ENCODE measurements at regions of chr5 and their contacts with region 1.

Region 1: GRCh38 chr5:141040771-141041426 is 10.3 kb upstream of the PCDHB1 start:
- DNase-seq: peak; percentile 88
- H3K4me3 ChIP-seq: no peak overlapping the region
- H3K4me3 Mint-ChIP-seq: no peak overlapping the region
- H3K27ac Mint-ChIP-seq: no peak overlapping the region
- H3K4me1 ChIP-seq: no peaks in the 10 kb centered on the region
- H3K4me1 Mint-ChIP-seq: no peaks in the 10 kb centered on the region
- H3K27me3 ChIP-seq: no peaks in the 10 kb centered on the region
- H3K27me3 Mint-ChIP-seq: no peaks in the 10 kb centered on the region
- CTCF ChIP-seq: peak; percentile 56 to 87

Region 2: DNA sequence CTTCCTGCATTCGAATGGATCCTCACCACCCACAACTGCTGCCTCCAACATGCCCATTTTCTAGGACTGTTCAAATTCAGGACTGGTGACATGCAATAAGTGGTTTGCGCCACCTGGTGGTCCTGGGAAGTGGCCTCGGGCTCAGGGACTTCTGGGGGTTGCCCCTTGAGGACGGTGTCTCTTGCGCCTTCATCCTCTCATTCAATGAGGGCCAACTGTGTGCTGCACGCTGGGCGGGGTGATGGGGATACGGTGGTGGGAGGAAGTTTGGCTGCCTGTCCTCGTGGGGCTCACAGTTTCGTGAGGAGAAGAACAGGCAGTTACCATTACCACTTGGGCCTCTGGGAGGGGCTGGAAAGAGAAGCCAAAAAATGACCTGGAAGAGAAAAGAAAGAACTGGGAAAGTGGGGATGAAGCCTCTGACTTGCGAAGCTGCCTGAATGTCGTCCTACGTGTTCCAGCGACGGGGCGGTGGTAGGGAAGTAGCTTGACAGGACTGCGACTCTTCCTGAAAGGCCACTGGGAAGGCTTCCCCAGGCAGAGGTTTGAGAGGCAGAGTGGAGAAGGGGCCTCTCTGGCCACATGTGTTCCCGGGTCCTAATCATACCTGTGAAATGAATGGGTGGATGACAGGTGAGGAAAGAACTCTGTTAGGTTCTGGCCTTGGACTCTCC is 1196.3 kb before region 1 on chr5:
- CTCF ChIA-PET with region 1: no interaction called
- POLR2A ChIA-PET with region 1: no interaction called
- intact Hi-C with region 1: no loop called
- DNase-seq: peak; percentile 84 to 85
- H3K4me3 ChIP-seq: no peak overlapping the region
- H3K4me3 Mint-ChIP-seq: no peak overlapping the region
- H3K27ac Mint-ChIP-seq: no peak overlapping the region
- H3K4me1 ChIP-seq: no peaks in the 10 kb centered on the region
- H3K4me1 Mint-ChIP-seq: no peaks in the 10 kb centered on the region
- H3K27me3 ChIP-seq: 0 out of 2 replicates have a peak, but pooled peaks cover 1% of the 10 kb centered on the region
- H3K27me3 Mint-ChIP-seq: peaks cover 15% of the 10 kb centered on the region
- CTCF ChIP-seq: peak; percentile 67 to 92

Region 3: GRCh38 chr5:140840978-140841959 is 199.6 kb before region 1 on chr5 and contains the start of gene PCDHA8:
- CTCF ChIA-PET with region 1: no interaction called
- POLR2A ChIA-PET with region 1: no interaction called
- intact Hi-C with region 1: loop called (anchors 1 kb)
- DNase-seq: no peak
- H3K4me3 ChIP-seq: no peak within 1 kb of the TSS
- H3K4me3 Mint-ChIP-seq: no peak within 1 kb of the TSS
- H3K27ac Mint-ChIP-seq: no peak within 1 kb of the TSS
- H3K4me1 ChIP-seq: no peaks in the 10 kb centered on the region
- H3K4me1 Mint-ChIP-seq: no peaks in the 10 kb centered on the region
- H3K27me3 ChIP-seq: no peaks in the 10 kb centered on the region
- H3K27me3 Mint-ChIP-seq: no peaks in the 10 kb centered on the region
- CTCF ChIP-seq: no peak
- total RNA-seq, gene PCDHA8: not detected in 2 replicates

Region 4: GRCh38 chr5:140855772-140856674 is 184.9 kb before region 1 on chr5 and contains the start of gene PCDHA10:
- CTCF ChIA-PET with region 1: no interaction called
- POLR2A ChIA-PET with region 1: no interaction called
- intact Hi-C with region 1: loop called (anchors 1 kb)
- DNase-seq: no peak
- H3K4me3 ChIP-seq: no peak within 1 kb of the TSS
- H3K4me3 Mint-ChIP-seq: no peak within 1 kb of the TSS
- H3K27ac Mint-ChIP-seq: no peak within 1 kb of the TSS
- H3K4me1 ChIP-seq: 0 out of 2 replicates have a peak, but pooled peaks cover 4% of the 10 kb centered on the region
- H3K4me1 Mint-ChIP-seq: no peaks in the 10 kb centered on the region
- H3K27me3 ChIP-seq: no peaks in the 10 kb centered on the region
- H3K27me3 Mint-ChIP-seq: no peaks in the 10 kb centered on the region
- CTCF ChIP-seq: no peak
- total RNA-seq, gene PCDHA10: 0.02 and 0.07 TPM in 2 replicates

Region 5: DNA sequence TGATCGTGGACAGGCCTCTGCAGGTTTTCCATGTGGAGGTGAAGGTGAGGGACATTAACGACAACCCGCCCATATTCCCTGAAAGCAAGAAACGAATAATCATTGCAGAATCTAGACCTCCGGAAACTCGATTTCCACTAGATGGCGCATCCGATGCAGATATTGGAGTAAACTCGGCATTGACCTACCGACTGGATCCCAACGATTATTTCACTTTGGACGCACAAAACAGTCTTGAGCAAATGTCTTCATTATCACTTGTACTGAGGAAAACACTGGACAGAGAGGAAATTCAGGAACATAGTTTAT is 158.4 kb before region 1 on chr5:
- CTCF ChIA-PET with region 1: no interaction called
- POLR2A ChIA-PET with region 1: no interaction called
- intact Hi-C with region 1: loop called (anchors 1 kb)
- DNase-seq: no peak
- H3K4me3 ChIP-seq: no peak overlapping the region
- H3K4me3 Mint-ChIP-seq: no peak overlapping the region
- H3K27ac Mint-ChIP-seq: no peak overlapping the region
- H3K4me1 ChIP-seq: no peaks in the 10 kb centered on the region
- H3K4me1 Mint-ChIP-seq: no peaks in the 10 kb centered on the region
- H3K27me3 ChIP-seq: no peaks in the 10 kb centered on the region
- H3K27me3 Mint-ChIP-seq: no peaks in the 10 kb centered on the region
- CTCF ChIP-seq: no peak

Region 6: DNA sequence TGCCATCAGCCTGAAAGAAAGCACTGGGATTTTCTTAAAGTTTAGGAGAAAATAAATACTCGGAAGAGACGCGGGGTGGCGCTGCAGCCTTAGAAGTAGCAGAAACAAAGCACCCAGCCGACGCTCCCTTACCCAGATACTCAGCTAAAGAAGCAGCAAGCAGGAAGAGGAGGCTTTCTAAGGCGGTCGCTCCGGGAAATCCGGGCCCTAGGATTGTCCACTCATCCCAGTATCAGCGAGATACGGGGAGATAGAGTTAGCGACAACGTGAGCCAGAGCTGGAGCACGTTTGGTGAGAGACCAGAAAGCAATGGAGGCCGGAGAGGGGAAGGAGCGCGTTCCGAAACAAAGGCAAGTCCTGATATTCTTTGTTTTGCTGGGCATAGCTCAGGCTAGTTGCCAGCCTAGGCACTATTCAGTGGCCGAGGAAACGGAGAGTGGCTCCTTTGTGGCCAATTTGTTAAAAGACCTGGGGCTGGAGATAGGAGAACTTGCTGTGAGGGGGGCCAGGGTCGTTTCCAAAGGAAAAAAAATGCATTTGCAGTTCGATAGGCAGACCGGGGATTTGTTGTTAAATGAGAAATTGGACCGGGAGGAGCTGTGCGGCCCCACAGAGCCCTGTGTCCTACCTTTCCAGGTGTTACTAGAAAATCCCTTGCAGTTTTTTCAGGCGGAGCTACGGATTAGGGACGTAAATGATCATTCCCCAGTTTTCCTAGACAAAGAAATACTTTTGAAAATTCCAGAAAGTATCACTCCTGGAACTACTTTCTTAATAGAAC is 53.8 kb after region 1 on chr5 and contains the start of gene PCDHB2:
- CTCF ChIA-PET with region 1: no interaction called
- POLR2A ChIA-PET with region 1: no interaction called
- intact Hi-C with region 1: no loop called
- DNase-seq: no peak
- H3K4me3 ChIP-seq: no peak within 1 kb of the TSS
- H3K4me3 Mint-ChIP-seq: peak within 1 kb of the TSS; percentile 21
- H3K27ac Mint-ChIP-seq: no peak within 1 kb of the TSS
- H3K4me1 ChIP-seq: no peaks in the 10 kb centered on the region
- H3K4me1 Mint-ChIP-seq: no peaks in the 10 kb centered on the region
- H3K27me3 ChIP-seq: no peaks in the 10 kb centered on the region
- H3K27me3 Mint-ChIP-seq: no peaks in the 10 kb centered on the region
- CTCF ChIP-seq: no peak
- total RNA-seq, gene PCDHB2: 0.20 and 0.21 TPM in 2 replicates

Measured in Caco-2 (cell line).